CD8-positive, alpha-beta memory T cell (primary cell): ENCODE measurements at regions of chr13 and their contacts with region 1.

Region 1: GRCh38 chr13:59677966-59678814 is 485.5 kb downstream of the DIAPH3 start:
- DNase-seq: peak in 1 of 5 donors; percentile 21
- H3K4me3 ChIP-seq: no peak overlapping the region
- H3K4me3 Mint-ChIP-seq: no peak overlapping the region
- H3K27ac ChIP-seq: no peak overlapping the region
- H3K27ac Mint-ChIP-seq: peak overlapping the region in 1 of 8 donors; percentile 30
- H3K4me1 ChIP-seq: no peaks in the 10 kb centered on the region
- H3K4me1 Mint-ChIP-seq: peaks cover 0 to 1% (median under 1%) of the 10 kb centered on the region in 3 donors
- H3K27me3 ChIP-seq: no peaks in the 10 kb centered on the region
- H3K27me3 Mint-ChIP-seq: no peaks in the 10 kb centered on the region

Region 2: GRCh38 chr13:59391696-59392095 is 286.5 kb before region 1 on chr13:
- CTCF ChIA-PET with region 1: interaction called, 15 read pairs
- POLR2A ChIA-PET with region 1: no interaction called
- DNase-seq: peak; percentile 3 to 69 (median 65)
- H3K4me3 ChIP-seq: no peak overlapping the region
- H3K4me3 Mint-ChIP-seq: no peak overlapping the region
- H3K27ac ChIP-seq: no peak overlapping the region
- H3K27ac Mint-ChIP-seq: no peak overlapping the region
- H3K4me1 ChIP-seq: peaks cover 15% of the 10 kb centered on the region
- H3K4me1 Mint-ChIP-seq: peaks cover 0 to 4% (median 0%) of the 10 kb centered on the region in 3 donors
- H3K27me3 ChIP-seq: no peaks in the 10 kb centered on the region
- H3K27me3 Mint-ChIP-seq: peaks cover 6 to 26% of the 10 kb centered on the region in 2 donors